HepG2 (cell line): ENCODE measurements at regions of chr22 and their contacts with region 1.

Region 1: GRCh38 chr22:23178512-23179254 is 1.6 kb upstream of the BCR start:
- DNase-seq: no peak
- ATAC-seq: peak; percentile 51
- H3K4me3 ChIP-seq: peak overlapping the region in 1 of 3 experiments; percentile 83; a peak in 2 of 6 replicates
- H3K27ac ChIP-seq: peak overlapping the region; percentile 60
- H3K4me1 ChIP-seq: peaks cover 65% of the 10 kb centered on the region
- H3K27me3 ChIP-seq: no peaks in the 10 kb centered on the region; a peak in 1 of 5 replicates
- CTCF ChIP-seq: peak; percentile 97
- EP300 ChIP-seq: no peak
- POLR2A ChIP-seq: no peak
- RAD21 ChIP-seq: peak; percentile 92

Region 2: DNA sequence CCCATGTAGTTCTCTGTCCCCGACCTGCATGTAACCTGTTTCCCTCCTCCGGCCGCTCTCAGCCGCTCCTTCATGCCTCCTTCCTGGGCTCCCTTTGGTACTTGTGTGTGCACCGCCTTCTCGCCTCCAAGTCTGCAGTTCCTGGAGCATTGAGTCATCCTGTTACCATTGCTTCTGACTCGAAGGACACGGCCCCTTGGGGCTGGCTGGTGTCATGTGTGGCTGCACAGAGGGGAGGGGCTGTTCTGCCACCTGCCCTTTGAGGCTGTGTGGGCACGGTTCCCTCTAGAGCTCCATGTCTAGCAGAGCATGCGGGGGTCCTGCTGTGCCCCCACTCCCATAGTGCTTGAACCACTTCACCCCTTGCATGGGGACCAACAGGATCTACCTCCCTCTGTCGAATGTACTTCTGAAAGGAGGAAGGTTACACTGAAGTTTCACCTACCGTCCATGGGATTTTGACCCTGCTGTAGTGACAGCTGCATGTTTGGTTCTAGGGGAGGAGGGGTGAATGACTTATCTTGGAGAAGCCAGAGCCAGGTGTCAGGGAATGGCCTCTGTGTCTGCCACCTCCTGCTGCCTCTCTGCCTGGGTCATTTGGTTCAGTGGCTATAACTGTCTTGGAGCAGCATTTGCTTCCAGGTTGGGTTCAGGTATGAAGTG is 41.3 kb after region 1 on chr22:
- CTCF ChIA-PET with region 1: no interaction called
- POLR2A ChIA-PET with region 1: no interaction called
- in situ Hi-C with region 1: loop called (anchors 5 kb)
- intact Hi-C with region 1: loop called (anchors 2 kb)
- DNase-seq: no peak
- ATAC-seq: no peak
- H3K4me3 ChIP-seq: no peak overlapping the region
- H3K27ac ChIP-seq: no peak overlapping the region
- H3K4me1 ChIP-seq: peaks cover 85% of the 10 kb centered on the region
- H3K27me3 ChIP-seq: no peaks in the 10 kb centered on the region
- CTCF ChIP-seq: no peak
- EP300 ChIP-seq: no peak
- POLR2A ChIP-seq: no peak
- RAD21 ChIP-seq: no peak

Region 3: GRCh38 chr22:23248583-23248982 is 69.9 kb after region 1 on chr22:
- CTCF ChIA-PET with region 1: interaction called, 4 read pairs
- POLR2A ChIA-PET with region 1: no interaction called
- in situ Hi-C with region 1: no loop called
- intact Hi-C with region 1: loop called (anchors 2 kb)
- DNase-seq: peak; percentile 53
- ATAC-seq: peak; percentile 64
- H3K4me3 ChIP-seq: no peak overlapping the region
- H3K27ac ChIP-seq: no peak overlapping the region
- H3K4me1 ChIP-seq: peaks cover 85% of the 10 kb centered on the region
- H3K27me3 ChIP-seq: no peaks in the 10 kb centered on the region
- CTCF ChIP-seq: no peak
- EP300 ChIP-seq: no peak
- POLR2A ChIP-seq: no peak
- RAD21 ChIP-seq: no peak

Region 4: DNA sequence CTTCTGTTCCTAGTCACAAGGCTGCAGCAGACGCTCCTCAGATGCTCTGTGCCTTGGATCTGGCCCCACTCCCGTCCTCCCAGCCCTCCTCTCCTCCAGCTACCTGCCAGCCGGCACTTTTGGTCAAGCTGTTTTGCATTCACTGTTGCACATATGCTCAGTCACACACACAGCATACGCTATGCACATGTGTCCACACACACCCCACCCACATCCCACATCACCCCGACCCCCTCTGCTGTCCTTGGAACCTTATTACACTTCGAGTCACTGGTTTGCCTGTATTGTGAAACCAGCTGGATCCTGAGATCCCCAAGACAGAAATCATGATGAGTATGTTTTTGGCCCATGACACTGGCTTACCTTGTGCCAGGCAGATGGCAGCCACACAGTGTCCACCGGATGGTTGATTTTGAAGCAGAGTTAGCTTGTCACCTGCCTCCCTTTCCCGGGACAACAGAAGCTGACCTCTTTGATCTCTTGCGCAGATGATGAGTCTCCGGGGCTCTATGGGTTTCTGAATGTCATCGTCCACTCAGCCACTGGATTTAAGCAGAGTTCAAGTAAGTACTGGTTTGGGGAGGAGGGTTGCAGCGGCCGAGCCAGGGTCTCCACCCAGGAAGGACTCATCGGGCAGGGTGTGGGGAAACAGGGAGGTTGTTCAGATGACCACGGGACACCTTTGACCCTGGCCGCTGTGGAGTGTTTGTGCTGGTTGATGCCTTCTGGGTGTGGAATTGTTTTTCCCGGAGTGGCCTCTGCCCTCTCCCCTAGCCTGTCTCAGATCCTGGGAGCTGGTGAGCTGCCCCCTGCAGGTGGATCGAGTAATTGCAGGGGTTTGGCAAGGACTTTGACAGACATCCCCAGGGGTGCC is 111.4 kb after region 1 on chr22:
- CTCF ChIA-PET with region 1: interaction called, 45 read pairs
- POLR2A ChIA-PET with region 1: no interaction called
- in situ Hi-C with region 1: no loop called
- intact Hi-C with region 1: no loop called
- DNase-seq: peak; percentile 80
- ATAC-seq: peak; percentile 87
- H3K4me3 ChIP-seq: no peak overlapping the region
- H3K27ac ChIP-seq: peak overlapping the region; percentile 63
- H3K4me1 ChIP-seq: peaks cover 32% of the 10 kb centered on the region
- H3K27me3 ChIP-seq: no peaks in the 10 kb centered on the region
- CTCF ChIP-seq: peak; percentile 90
- EP300 ChIP-seq: no peak
- POLR2A ChIP-seq: no peak
- RAD21 ChIP-seq: peak; percentile 44